H1 (cell line): ENCODE measurements at regions of chr1 and their contacts with region 1.

Region 1: GRCh38 chr1:11379851-11380250 is 99.1 kb upstream of the DISP3 start:
- DNase-seq: no peak
- H3K4me3 ChIP-seq: no peak overlapping the region
- H3K27ac ChIP-seq: no peak overlapping the region
- H3K4me1 ChIP-seq: no peaks in the 10 kb centered on the region; a peak in 2 of 7 replicates
- H3K27me3 ChIP-seq: no peaks in the 10 kb centered on the region
- CTCF ChIP-seq: no peak
- EP300 ChIP-seq: no peak
- POLR2A ChIP-seq: no peak
- RAD21 ChIP-seq: 0 out of 4 replicates have a peak, but pooled peaks of 1 of the 2 experiments have one; percentile 10

Region 2: GRCh38 chr1:11364170-11364569 is 15.7 kb before region 1 on chr1:
- CTCF ChIA-PET with region 1: interaction called, 34 read pairs
- POLR2A ChIA-PET with region 1: interaction called, 4 read pairs
- DNase-seq: no peak
- H3K4me3 ChIP-seq: no peak overlapping the region
- H3K27ac ChIP-seq: no peak overlapping the region
- H3K4me1 ChIP-seq: peaks cover 0 to 3% (median 1%) of the 10 kb centered on the region in 4 experiments; a peak in 2 of 7 replicates
- H3K27me3 ChIP-seq: no peaks in the 10 kb centered on the region
- CTCF ChIP-seq: peak; percentile 52 to 59 (median 59)
- EP300 ChIP-seq: no peak
- POLR2A ChIP-seq: no peak
- RAD21 ChIP-seq: peak; percentile 51 to 65